SK-N-SH (cell line): ENCODE measurements at regions of chr1 and their contacts with region 1.

Region 1: DNA sequence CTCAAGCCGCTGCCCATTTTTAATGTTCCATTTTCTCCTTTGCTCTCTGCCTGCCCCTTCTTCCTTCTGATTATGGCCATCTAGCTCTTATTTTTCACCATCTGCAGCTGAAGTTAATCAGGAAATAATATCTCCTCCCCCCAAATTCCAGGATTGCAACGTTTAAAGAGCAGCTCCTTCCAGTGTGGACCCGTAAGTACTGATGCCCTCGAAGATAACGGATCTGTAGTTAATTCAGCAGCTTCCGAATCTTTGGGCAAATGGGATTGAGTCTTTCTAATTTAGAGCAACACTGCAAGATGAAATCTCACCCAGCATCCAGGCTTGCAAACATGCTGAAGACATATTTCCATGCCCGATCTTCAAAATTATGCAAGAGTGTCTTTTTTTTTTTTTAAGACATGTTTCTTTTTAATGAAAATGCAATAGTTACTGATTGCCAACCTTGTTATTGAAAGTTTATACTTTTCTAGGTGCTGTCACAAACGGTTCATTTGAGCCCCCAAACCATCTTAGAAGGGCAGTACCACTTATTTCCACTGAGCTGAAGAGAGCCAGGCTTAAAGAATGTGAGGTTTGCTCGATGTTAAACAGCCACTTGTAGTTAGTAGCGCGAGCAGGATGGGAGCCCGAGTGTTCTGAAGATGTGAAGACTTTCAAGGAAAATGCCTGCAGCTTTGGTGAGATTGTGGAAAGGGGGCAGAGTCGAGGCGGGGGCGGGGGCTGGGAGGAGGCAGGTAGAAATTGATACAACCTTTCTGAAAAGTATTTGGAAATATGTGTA is 10.9 kb upstream of the RCAN3 start:
- DNase-seq: peak; percentile 56
- H3K4me3 ChIP-seq: peak overlapping the region; percentile 6 to 48; a peak in 3 of 4 replicates
- H3K27ac ChIP-seq: no peak overlapping the region; a peak in 1 of 4 replicates
- H3K4me1 ChIP-seq: no peaks in the 10 kb centered on the region
- H3K27me3 ChIP-seq: no peaks in the 10 kb centered on the region
- CTCF ChIP-seq: peak; percentile 38
- EP300 ChIP-seq: no peak
- RAD21 ChIP-seq: no peak

Region 2: GRCh38 chr1:24351918-24352627 is 139.7 kb before region 1 on chr1:
- CTCF ChIA-PET with region 1: no interaction called
- POLR2A ChIA-PET with region 1: no interaction called
- DNase-seq: no peak
- H3K4me3 ChIP-seq: no peak overlapping the region
- H3K27ac ChIP-seq: peak overlapping the region in 1 of 2 experiments; percentile 6; a peak in 1 of 4 replicates
- H3K4me1 ChIP-seq: peaks cover 0 to 4% of the 10 kb centered on the region in 2 experiments; a peak in 1 of 4 replicates
- H3K27me3 ChIP-seq: no peaks in the 10 kb centered on the region
- CTCF ChIP-seq: no peak
- EP300 ChIP-seq: no peak
- RAD21 ChIP-seq: no peak

Region 3: GRCh38 chr1:24481101-24481500 is 10.7 kb before region 1 on chr1:
- CTCF ChIA-PET with region 1: interaction called, 10 read pairs
- POLR2A ChIA-PET with region 1: no interaction called
- DNase-seq: no peak
- H3K4me3 ChIP-seq: no peak overlapping the region
- H3K27ac ChIP-seq: no peak overlapping the region
- H3K4me1 ChIP-seq: no peaks in the 10 kb centered on the region
- H3K27me3 ChIP-seq: no peaks in the 10 kb centered on the region
- CTCF ChIP-seq: no peak
- EP300 ChIP-seq: no peak
- RAD21 ChIP-seq: no peak

Region 4: DNA sequence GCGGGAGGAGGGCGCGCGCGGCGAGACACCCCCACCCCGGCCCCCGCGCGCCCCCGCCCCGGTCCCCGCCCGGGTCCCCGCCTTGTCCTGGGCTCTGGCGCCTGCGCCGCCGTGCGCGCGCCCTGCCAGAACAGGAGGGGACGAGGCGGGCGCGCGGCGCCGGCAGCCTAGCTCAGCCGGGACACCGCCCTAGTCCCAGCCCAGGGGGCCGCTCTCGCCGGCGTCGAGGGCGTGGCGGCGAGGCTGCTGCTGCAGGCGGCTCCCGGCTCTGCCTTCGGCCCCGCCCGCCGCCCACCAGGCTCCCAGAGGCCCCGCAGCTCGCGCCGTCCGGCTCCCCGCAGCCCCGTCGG is 10.9 kb after region 1 on chr1 and contains the start of gene RCAN3:
- CTCF ChIA-PET with region 1: interaction called, 12 read pairs
- POLR2A ChIA-PET with region 1: no interaction called
- DNase-seq: peak; percentile 97
- H3K4me3 ChIP-seq: peak within 1 kb of the TSS; percentile 78 to 82
- H3K27ac ChIP-seq: peak within 1 kb of the TSS; percentile 62 to 74
- H3K4me1 ChIP-seq: peaks cover 0 to 7% of the 10 kb centered on the region in 2 experiments; a peak in 1 of 4 replicates
- H3K27me3 ChIP-seq: no peaks in the 10 kb centered on the region
- CTCF ChIP-seq: no peak
- EP300 ChIP-seq: no peak
- RAD21 ChIP-seq: no peak
- polyA plus RNA-seq, gene RCAN3: 4.8 TPM in 2 replicates